Posterior vena cava (tissue), 2 donors: ENCODE measurements at regions of chr21 and their contacts with region 1.

Region 1: DNA sequence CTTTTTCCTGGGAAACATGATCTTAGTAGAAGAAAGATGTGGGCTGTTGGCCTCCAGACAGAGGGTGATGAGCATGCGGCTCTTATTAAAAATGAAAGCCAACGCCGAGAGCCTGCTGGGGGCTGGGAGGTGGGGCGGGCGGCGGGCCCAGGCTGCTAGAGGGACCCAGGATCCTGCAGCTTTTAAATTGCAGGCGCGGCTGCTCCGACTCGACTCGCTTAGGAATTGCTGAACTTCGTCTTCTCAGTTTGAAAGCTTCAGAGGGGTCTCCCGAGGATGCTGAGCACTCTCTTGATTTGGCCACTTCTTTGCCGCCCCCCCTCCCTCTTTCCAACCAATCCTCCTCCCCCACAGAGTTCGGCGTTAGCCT is 1.2 kb downstream of the AGPAT3 start:
- DNase-seq: peak; percentile 78

Region 2: GRCh38 chr21:43938751-43939442 is 72.7 kb after region 1 on chr21:
- intact Hi-C with region 1: loop called in 1 of 2 experiments (anchors 10 kb)
- DNase-seq: peak; percentile 92